ENCODE measurements at regions of chr15 and their contacts with region 1.

Region 1: DNA sequence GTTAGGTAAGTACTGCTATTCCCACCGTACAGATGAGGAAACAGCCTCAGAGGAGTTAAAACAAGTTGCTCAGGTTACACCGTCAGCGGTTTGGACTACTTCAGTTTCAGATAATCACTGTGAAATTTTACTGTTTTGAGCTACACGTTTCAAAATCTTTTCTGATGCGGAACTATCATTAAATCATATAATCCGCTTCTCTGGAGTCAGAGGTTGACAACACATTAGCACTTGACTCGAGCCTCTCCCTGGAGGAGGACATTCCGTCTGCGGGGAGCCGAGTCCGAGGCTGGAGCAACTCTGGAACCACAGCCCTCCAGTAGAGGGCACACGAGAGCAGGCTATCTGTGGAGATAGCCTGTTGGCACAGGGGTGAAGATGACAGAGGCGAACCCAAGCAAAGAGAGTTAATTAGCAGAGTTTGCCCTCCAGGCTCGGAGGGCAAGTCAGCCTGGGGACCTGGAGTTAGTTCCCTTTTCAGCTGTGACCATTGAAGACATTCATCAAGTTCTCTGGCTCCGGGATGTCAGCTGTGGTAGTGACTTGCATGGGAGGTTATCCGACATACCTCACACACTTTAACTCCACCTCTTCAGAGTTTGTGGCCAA is 131.2 kb downstream of the IGF1R start:
- DNase-seq: peak; percentile 80
- ATAC-seq: peak; percentile 98
- H3K4me3 ChIP-seq: peak overlapping the region; percentile 6 to 38; a peak in 2 of 4 replicates
- H3K27ac ChIP-seq: peak overlapping the region; percentile 85
- H3K4me1 ChIP-seq: peaks cover 60% of the 10 kb centered on the region
- H3K27me3 ChIP-seq: no peaks in the 10 kb centered on the region
- CTCF ChIP-seq: peak; percentile 97

Region 2: DNA sequence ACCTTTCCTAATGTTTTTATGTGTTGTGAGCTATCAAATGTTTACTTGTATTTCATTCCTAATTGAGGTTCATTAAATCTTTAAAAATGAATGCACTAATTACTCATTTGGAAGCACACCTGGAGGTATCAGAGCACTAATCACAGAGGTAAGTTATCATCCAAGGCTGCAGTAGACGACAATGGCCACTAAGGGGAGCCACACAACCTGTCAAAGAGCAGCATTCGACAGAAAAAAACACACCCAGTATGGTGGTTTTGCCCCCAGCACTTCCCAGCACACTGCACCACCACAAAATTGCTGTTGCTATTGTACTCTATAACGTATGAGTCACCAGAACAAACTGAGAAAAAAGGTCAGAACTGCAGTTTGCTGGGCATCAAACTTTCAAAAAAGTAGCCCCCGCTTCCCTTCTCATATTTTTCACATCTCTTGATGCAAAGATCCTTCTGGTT is 337.2 kb before region 1 on chr15:
- CTCF ChIA-PET with region 1: no interaction called
- POLR2A ChIA-PET with region 1: no interaction called
- in situ Hi-C with region 1: no loop called
- intact Hi-C with region 1: loop called (anchors 10 kb)
- DNase-seq: peak; percentile 36
- ATAC-seq: peak; percentile 81
- H3K4me3 ChIP-seq: no peak overlapping the region
- H3K27ac ChIP-seq: no peak overlapping the region
- H3K4me1 ChIP-seq: peaks cover 8% of the 10 kb centered on the region
- H3K27me3 ChIP-seq: no peaks in the 10 kb centered on the region
- CTCF ChIP-seq: peak; percentile 92

Region 3: DNA sequence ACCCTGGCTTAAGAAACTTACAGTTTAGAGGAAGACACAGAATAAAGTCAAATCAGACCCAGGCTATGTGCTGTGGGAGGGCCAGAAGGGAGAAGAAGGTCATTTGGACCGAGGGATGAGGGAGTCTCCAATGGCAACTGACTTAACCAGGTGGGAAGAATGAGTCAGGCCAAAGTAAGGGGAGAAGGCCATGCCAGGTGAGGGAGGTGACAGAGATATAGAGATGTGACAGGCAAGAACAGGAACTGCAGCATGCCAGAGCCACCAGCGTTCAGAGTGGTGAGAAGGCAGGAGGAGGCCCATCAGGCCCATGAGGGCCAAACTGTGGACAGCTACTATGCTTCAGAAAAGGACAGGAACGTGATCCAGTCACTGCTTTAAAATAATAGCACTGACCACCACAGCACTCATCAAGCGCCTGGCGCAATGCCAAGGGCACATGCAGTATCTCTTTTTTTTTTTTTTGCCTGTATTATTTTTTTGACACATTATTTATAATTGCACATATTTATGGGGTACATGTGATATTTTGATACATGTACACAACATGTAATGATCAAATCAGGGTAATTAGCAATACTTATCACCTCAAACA is 285.6 kb before region 1 on chr15:
- CTCF ChIA-PET with region 1: no interaction called
- POLR2A ChIA-PET with region 1: interaction called, 13 read pairs
- in situ Hi-C with region 1: no loop called
- intact Hi-C with region 1: no loop called
- DNase-seq: no peak
- ATAC-seq: no peak; the same call in 1 of the 2 replicates
- H3K4me3 ChIP-seq: no peak overlapping the region
- H3K27ac ChIP-seq: no peak overlapping the region
- H3K4me1 ChIP-seq: no peaks in the 10 kb centered on the region
- H3K27me3 ChIP-seq: no peaks in the 10 kb centered on the region
- CTCF ChIP-seq: no peak

Region 4: DNA sequence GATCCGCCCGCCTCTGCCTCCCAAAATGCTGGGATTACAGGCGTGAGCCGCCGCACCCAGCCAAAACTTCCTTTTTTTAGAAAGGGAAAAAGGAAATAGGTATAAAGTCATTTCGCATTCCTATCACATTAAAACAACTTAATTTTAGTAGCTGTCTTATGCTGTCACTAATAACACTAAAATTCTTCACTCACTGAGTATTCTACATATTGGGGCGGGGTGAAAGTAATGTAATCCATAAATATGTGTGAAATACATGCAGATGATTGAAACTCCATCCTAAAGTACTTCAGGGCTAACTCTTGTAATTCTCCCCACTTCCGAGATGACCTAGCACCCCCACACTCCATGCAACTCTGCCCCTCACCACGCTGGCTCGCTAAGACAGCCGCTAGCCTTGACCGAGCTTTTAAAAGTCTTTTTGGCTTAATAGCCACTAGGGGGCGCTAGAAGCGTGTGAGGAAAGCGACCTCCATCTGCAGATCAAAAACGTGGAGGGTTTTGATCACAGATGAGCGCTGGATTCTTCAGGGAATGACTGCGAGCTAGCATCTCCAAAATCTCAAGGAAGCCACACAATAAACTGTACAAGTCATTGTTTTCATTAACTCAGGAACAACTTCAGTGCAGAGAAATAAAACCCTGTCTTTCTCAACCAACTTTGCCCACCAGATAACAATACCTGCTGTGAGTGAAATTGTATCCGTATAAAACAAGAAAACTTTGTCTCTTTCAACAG is 260.6 kb before region 1 on chr15:
- CTCF ChIA-PET with region 1: no interaction called
- POLR2A ChIA-PET with region 1: no interaction called
- in situ Hi-C with region 1: no loop called
- intact Hi-C with region 1: loop called (anchors 10 kb)
- DNase-seq: peak; percentile 33
- ATAC-seq: peak; percentile 95
- H3K4me3 ChIP-seq: no peak overlapping the region
- H3K27ac ChIP-seq: peak overlapping the region; percentile 41; the same call in 1 of the 2 replicates
- H3K4me1 ChIP-seq: peaks cover 8% of the 10 kb centered on the region
- H3K27me3 ChIP-seq: no peaks in the 10 kb centered on the region
- CTCF ChIP-seq: peak; percentile 94

Region 5: DNA sequence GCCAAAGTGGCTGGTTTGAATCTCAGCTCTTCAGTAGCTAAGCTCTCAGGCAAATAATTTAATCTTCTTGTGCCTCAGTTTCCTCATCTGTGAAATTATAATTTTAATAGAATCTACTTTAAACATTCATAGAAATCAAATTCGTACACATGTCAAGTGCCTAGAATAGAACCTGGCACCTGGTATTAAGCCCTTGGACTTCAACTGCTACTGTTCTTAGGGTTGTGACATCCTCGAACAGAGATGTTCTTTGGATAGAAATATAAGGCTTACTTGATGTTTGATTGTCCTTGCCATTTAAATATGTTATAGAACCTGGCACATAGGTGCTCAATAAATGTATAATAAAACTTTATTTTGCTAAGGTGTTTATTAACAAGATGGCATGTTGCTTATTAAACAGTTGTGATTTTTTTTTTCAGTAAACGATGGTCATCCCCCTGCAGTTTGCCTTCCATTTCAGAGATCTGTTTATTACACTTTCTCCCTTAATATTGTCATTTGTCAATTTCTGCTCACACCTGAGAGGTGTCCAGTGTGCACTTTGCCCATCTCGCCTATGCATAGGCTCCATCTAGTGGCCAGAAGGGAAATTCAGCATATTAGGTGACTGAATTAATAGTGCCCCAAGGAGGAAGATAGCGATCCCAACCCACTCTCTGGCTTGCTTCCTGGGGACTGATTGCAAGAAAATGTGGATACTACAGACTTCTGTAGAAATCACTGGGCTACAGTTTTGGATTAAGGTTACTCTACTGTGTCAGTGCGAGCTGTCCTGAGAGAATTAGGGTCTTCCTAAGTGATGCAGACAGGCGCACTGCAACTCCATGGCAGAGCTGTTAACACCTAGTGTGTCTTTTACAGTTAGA is 120.5 kb before region 1 on chr15:
- CTCF ChIA-PET with region 1: no interaction called
- POLR2A ChIA-PET with region 1: no interaction called
- in situ Hi-C with region 1: no loop called
- intact Hi-C with region 1: loop called (anchors 10 kb)
- DNase-seq: peak; percentile 39
- ATAC-seq: peak; percentile 90
- H3K4me3 ChIP-seq: 0 out of 4 replicates have a peak overlapping the region, but pooled peaks of 1 of the 2 experiments have one; percentile 8
- H3K27ac ChIP-seq: peak overlapping the region; percentile 13; the same call in 1 of the 2 replicates
- H3K4me1 ChIP-seq: peaks cover 57% of the 10 kb centered on the region
- H3K27me3 ChIP-seq: no peaks in the 10 kb centered on the region
- CTCF ChIP-seq: peak; percentile 95

Region 6: DNA sequence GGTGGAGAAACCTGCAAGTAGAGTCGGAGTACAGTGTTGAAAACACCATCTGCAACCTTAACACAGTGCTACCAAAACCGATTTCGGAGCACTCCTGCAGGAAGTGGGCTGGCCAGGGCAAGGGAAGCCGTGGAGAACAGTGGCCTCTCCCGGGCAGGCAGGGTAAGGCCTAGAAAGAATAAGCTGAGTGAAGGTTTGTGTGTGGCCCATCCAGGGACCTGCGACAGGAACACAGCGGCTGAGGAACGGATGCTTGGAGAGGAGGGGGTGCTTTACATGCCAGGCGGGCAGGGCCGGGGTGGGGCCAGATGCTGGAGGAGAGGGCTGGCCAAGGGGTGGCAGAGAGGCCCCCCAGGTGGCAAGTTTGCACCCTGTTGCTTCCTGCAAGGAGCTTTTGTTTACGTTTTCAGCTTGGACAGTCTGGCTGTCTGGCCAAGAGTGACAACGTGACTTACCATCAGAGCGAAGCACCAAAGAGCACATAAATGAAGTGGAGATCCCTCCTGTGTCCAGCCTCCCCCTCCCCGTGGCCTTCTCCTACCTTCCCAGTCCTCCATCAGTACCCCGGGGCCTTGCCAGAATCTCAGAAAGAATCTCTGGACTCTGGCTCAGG is 71.5 kb after region 1 on chr15:
- CTCF ChIA-PET with region 1: interaction called, 10 read pairs
- POLR2A ChIA-PET with region 1: no interaction called
- in situ Hi-C with region 1: no loop called
- intact Hi-C with region 1: no loop called
- DNase-seq: no peak
- ATAC-seq: peak; percentile 82
- H3K4me3 ChIP-seq: peak overlapping the region in 1 of 2 experiments; percentile 90; a peak in 2 of 4 replicates
- H3K27ac ChIP-seq: peak overlapping the region; percentile 86
- H3K4me1 ChIP-seq: peaks cover 74% of the 10 kb centered on the region
- H3K27me3 ChIP-seq: no peaks in the 10 kb centered on the region
- CTCF ChIP-seq: peak; percentile 91